ENCODE measurements at regions of chr14 and their contacts with region 1.

Region 1: GRCh38 chr14:89351516-89352404 is 65.3 kb downstream of the FOXN3 start:
- DNase-seq: peak; percentile 35
- H3K4me3 ChIP-seq: no peak overlapping the region
- H3K27ac ChIP-seq: peak overlapping the region; percentile 67 to 70 (median 68)
- H3K4me1 ChIP-seq: peaks cover 5 to 27% (median 18%) of the 10 kb centered on the region in 4 donors
- H3K27me3 ChIP-seq: no peaks in the 10 kb centered on the region
- CTCF ChIP-seq: no peak
- EP300 ChIP-seq: no peak
- POLR2A ChIP-seq: no peak

Region 2: GRCh38 chr14:89270439-89271227 is 81.1 kb before region 1 on chr14:
- in situ Hi-C with region 1: no loop called
- intact Hi-C with region 1: no loop called
- DNase-seq: peak; percentile 72
- H3K4me3 ChIP-seq: no peak overlapping the region
- H3K27ac ChIP-seq: no peak overlapping the region
- H3K4me1 ChIP-seq: peaks cover 0 to 18% (median 8%) of the 10 kb centered on the region in 4 donors
- H3K27me3 ChIP-seq: no peaks in the 10 kb centered on the region
- CTCF ChIP-seq: peak in 1 of 5 experiments; percentile 9
- EP300 ChIP-seq: peak; percentile 60
- POLR2A ChIP-seq: no peak

Region 3: DNA sequence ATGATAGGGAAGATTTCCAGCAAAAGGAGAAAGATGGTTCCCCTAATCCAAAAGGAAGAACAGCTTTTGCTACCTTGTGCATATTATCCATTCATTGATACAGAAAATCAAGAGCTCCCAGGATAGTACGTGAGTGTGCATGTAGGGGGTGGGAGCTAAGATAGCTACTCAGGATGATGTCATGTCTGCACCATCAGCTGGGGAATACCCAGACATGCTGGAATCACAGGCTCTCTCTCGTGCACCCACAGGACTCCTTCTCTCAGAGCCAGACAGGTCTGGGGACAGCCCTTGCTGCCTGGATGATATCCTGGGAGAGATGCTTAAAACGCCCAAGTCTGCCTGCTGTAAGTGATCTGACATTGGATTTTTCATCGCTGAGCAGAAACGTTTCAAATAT is 26.4 kb after region 1 on chr14:
- in situ Hi-C with region 1: no loop called
- intact Hi-C with region 1: loop called (anchors 1 kb)
- DNase-seq: no peak
- H3K4me3 ChIP-seq: no peak overlapping the region
- H3K27ac ChIP-seq: no peak overlapping the region
- H3K4me1 ChIP-seq: peaks cover 0 to 11% (median under 1%) of the 10 kb centered on the region in 4 donors
- H3K27me3 ChIP-seq: no peaks in the 10 kb centered on the region
- CTCF ChIP-seq: no peak
- EP300 ChIP-seq: no peak
- POLR2A ChIP-seq: no peak

Region 4: GRCh38 chr14:89399594-89400068 is 47.9 kb after region 1 on chr14:
- in situ Hi-C with region 1: no loop called
- intact Hi-C with region 1: loop called (anchors 10 kb)
- DNase-seq: no peak
- H3K4me3 ChIP-seq: no peak overlapping the region
- H3K27ac ChIP-seq: peak overlapping the region in 2 of 4 donors; percentile 26 to 44
- H3K4me1 ChIP-seq: peaks cover 0 to 24% (median 10%) of the 10 kb centered on the region in 4 donors
- H3K27me3 ChIP-seq: no peaks in the 10 kb centered on the region
- CTCF ChIP-seq: no peak
- EP300 ChIP-seq: no peak
- POLR2A ChIP-seq: no peak

Region 5: GRCh38 chr14:89983375-89983774 is 631.6 kb after region 1 on chr14:
- in situ Hi-C with region 1: no loop called
- intact Hi-C with region 1: no loop called
- DNase-seq: no peak
- H3K4me3 ChIP-seq: no peak overlapping the region
- H3K27ac ChIP-seq: no peak overlapping the region
- H3K4me1 ChIP-seq: no peaks in the 10 kb centered on the region
- H3K27me3 ChIP-seq: no peaks in the 10 kb centered on the region
- CTCF ChIP-seq: no peak
- EP300 ChIP-seq: no peak
- POLR2A ChIP-seq: no peak